ENCODE measurements at regions of chr21 and their contacts with region 1.

Region 1: DNA sequence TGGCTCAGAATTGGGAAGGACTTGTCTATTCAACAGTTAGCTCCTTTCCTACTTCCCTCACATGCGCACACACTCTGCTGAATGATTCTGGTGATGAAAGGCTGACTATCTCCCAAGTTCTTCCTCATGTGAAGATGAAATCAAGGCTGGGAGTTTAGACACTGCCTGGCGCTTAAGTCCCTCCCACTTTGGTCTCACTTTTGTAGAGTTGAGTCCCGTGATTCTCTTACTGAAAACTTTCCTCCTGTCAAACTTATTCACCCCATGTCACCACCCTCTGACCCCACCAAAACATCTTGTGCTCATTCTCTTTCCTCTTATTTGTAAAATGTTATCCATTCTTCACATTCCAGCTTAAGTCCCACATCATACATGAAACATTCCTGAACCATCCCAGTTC is 8.4 kb upstream of the MRPS6 start:
- DNase-seq: no peak
- H3K4me3 ChIP-seq: no peak overlapping the region
- H3K27ac ChIP-seq: no peak overlapping the region
- H3K27me3 ChIP-seq: no peaks in the 10 kb centered on the region
- CTCF ChIP-seq: no peak

Region 2: DNA sequence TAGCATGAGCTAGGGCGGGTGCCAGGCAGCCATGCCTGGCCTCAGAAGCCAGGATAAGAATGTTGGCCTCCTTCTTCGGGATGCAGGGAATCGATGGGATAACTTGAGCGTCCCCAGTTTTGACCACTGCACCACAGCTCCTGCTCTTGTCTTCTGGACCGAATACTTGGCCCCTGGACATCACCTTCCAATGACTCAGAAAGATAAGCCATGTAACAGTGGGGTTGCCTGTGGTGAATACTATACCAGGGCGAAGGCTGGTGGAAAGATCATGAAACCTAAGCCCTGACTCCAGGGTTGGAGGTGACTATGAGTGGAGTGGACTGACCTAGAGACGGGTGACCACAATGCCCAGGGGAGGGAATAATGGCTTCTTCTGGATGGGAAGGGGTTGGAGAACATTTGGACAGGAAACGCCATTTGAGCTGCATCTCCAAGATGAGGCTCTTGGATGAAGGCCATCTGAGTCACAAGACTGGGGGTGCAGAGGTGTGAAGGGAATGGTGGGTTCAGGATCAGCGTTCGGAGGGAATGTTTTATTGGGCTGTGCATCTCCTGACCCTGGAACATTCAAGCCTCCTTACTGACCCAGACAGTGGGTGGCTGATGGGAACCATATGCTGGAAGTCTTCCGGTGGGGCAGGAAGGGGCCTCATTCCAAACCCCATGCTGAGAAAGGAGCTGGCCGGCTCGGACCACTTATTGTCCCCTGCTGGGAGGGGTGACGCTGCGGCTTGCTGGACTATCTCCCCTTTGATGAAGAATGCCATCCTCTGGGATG is 280.3 kb after region 1 on chr21:
- intact Hi-C with region 1: loop called in 1 of 2 experiments (anchors 5 kb)
- DNase-seq: no peak
- H3K4me3 ChIP-seq: no peak overlapping the region
- H3K27ac ChIP-seq: peak overlapping the region in 40 of 59 donors; percentile 2 to 80 (median 48)
- H3K27me3 ChIP-seq: no peaks in the 10 kb centered on the region
- CTCF ChIP-seq: no peak

Measured in dorsolateral prefrontal cortex (tissue), 120 donors.